Mammary epithelial cell (primary cell): ENCODE measurements at regions of chr3 and their contacts with region 1.

Region 1: GRCh38 chr3:46078712-46079400 is 51.6 kb upstream of the XCR1 start:
- DNase-seq: peak; percentile 80
- H3K4me3 ChIP-seq: no peak overlapping the region
- H3K27ac ChIP-seq: no peak overlapping the region
- H3K4me1 ChIP-seq: peaks cover 26% of the 10 kb centered on the region
- H3K27me3 ChIP-seq: no peaks in the 10 kb centered on the region
- CTCF ChIP-seq: peak; percentile 98

Region 2: GRCh38 chr3:45665101-45665572 is 413.7 kb before region 1 on chr3:
- CTCF ChIA-PET with region 1: no interaction called
- dilution Hi-C with region 1: no loop called
- in situ Hi-C with region 1: no loop called
- intact Hi-C with region 1: loop called (anchors 5 kb)
- DNase-seq: peak; percentile 61
- H3K4me3 ChIP-seq: peak overlapping the region in 2 of 3 experiments; percentile 36 to 38
- H3K27ac ChIP-seq: no peak overlapping the region
- H3K4me1 ChIP-seq: peaks cover 37% of the 10 kb centered on the region
- H3K27me3 ChIP-seq: no peaks in the 10 kb centered on the region
- CTCF ChIP-seq: peak; percentile 76 to 82

Region 3: GRCh38 chr3:45841757-45842491 is 236.9 kb before region 1 on chr3 and contains the start of gene LZTFL1:
- CTCF ChIA-PET with region 1: interaction called, 4 read pairs
- dilution Hi-C with region 1: no loop called
- in situ Hi-C with region 1: no loop called
- intact Hi-C with region 1: loop called (anchors 1 kb)
- DNase-seq: peak; percentile 96
- H3K4me3 ChIP-seq: peak within 1 kb of the TSS; percentile 67 to 78 (median 77)
- H3K27ac ChIP-seq: peak within 1 kb of the TSS; percentile 68
- H3K4me1 ChIP-seq: peaks cover 7% of the 10 kb centered on the region
- H3K27me3 ChIP-seq: no peaks in the 10 kb centered on the region
- CTCF ChIP-seq: no peak
- total RNA-seq, gene LZTFL1: 13.1 to 13.7 TPM

Region 4: DNA sequence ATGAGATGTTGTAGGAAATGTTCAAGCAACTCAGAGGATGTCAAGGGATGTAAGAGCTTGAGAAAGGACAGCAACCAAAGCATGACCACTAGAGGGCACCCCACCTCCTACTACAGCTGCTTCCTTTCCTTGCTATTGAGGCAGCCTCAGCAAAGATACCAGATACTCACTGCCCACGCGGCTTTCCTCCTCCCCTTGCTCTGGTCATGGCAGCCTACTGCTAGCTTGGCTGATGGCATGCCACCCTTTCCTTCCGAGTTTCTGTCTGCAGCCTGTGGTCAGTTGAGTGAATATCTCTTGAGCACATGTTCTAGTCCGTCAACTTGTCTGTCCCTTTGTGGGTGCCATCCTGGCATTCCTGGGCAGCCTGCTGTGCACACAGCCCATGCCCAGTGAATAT is 140.0 kb before region 1 on chr3:
- CTCF ChIA-PET with region 1: no interaction called
- dilution Hi-C with region 1: loop called (anchors 5 kb)
- in situ Hi-C with region 1: loop called (anchors 5 kb)
- intact Hi-C with region 1: loop called (anchors 1 kb)
- DNase-seq: peak; percentile 74
- H3K4me3 ChIP-seq: no peak overlapping the region
- H3K27ac ChIP-seq: no peak overlapping the region
- H3K4me1 ChIP-seq: no peaks in the 10 kb centered on the region
- H3K27me3 ChIP-seq: no peaks in the 10 kb centered on the region
- CTCF ChIP-seq: peak; percentile 93 to 95

Region 5: GRCh38 chr3:46368569-46368968 is 289.7 kb after region 1 on chr3:
- CTCF ChIA-PET with region 1: no interaction called
- dilution Hi-C with region 1: loop called (anchors 25 kb)
- in situ Hi-C with region 1: no loop called
- intact Hi-C with region 1: loop called (anchors 1 kb)
- DNase-seq: no peak
- H3K4me3 ChIP-seq: no peak overlapping the region
- H3K27ac ChIP-seq: no peak overlapping the region
- H3K4me1 ChIP-seq: no peaks in the 10 kb centered on the region
- H3K27me3 ChIP-seq: peaks cover 2% of the 10 kb centered on the region
- CTCF ChIP-seq: peak; percentile 3 to 36

Region 6: DNA sequence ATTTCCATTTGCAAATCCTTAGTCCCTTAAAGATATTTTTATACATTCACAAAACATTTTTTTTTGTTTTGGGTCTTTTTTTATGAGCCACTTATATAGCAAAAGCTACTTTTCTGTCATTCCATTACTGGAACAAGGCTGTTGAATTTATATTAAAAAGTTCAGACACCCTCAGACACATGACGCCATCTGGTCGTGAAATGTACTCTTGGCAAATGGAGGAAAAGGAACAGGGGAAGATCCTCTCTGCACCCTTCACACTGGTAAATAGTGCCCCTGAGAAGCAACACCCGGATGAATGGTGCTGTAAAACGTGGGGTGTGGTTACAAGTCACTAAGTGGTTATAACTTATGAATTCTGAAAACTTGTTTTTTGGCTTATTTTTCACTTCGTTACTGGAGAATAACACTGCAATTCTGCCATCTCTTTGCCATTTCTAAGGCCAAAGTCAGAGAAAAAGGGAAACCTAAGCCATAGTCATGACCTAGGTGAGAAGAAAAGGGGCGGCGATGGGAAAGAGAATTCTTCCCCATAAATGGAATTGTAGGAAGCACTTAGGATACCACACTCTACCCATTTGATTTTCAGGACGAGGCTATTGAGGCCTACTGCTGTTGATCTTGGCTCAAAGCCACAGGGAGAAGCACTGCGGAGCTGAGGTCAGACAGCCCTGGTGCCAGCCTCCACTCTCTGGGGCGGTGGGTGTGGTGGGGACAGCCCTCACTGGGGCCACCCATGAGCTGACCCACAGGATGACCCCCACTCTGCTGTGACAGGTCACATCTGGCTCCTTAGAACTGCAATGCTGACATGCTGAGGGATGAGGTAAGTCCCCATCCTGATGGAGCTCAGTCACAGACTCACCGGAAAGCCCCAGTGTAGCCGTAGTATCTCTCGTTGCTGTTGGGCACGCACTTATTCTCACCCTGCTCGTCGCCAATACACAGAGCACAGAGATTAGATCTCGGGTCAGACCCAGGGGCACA is 364.0 kb after region 1 on chr3:
- CTCF ChIA-PET with region 1: no interaction called
- dilution Hi-C with region 1: no loop called
- in situ Hi-C with region 1: no loop called
- intact Hi-C with region 1: loop called (anchors 2 kb)
- DNase-seq: no peak
- H3K4me3 ChIP-seq: no peak overlapping the region
- H3K27ac ChIP-seq: no peak overlapping the region
- H3K4me1 ChIP-seq: no peaks in the 10 kb centered on the region
- H3K27me3 ChIP-seq: no peaks in the 10 kb centered on the region
- CTCF ChIP-seq: no peak

Region 7: DNA sequence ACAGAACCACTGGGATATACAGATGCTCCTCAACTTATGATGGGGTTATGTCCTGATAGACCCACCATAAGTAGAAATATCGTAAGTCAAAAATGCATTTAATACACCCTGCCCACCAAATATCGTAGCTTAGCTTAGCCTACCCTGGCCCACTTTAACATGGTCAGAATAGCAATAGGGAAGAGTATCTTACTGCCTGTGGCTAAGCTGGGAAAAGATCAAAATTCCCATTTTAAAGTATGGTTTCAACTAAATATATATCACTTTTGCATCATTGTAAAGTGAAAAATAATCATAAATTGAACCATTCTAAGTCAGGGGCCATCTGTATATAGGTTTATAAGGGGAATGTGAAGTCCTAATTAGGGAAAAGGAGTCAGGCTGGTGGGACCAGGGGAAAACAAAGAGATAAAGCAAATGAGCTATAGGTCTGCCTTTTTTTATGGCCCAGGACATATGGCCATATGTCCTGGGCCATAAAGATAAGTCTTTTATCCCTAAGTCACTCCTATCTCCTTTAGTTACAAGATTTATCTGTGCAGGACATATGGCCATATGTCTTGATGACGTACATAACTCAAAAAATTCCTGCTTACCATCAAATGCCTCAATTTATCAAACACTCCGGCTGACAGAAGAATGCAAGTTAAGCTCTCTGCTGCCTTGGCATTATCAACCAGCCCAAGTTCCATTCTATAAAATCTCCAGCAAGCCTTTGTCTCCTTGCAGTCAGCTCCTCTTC is 430.2 kb after region 1 on chr3:
- CTCF ChIA-PET with region 1: no interaction called
- dilution Hi-C with region 1: no loop called
- in situ Hi-C with region 1: no loop called
- intact Hi-C with region 1: no loop called
- DNase-seq: no peak
- H3K4me3 ChIP-seq: no peak overlapping the region
- H3K27ac ChIP-seq: no peak overlapping the region
- H3K4me1 ChIP-seq: no peaks in the 10 kb centered on the region
- H3K27me3 ChIP-seq: no peaks in the 10 kb centered on the region
- CTCF ChIP-seq: no peak